ENCODE measurements at regions of chr6 and their contacts with region 1.

Region 1: DNA sequence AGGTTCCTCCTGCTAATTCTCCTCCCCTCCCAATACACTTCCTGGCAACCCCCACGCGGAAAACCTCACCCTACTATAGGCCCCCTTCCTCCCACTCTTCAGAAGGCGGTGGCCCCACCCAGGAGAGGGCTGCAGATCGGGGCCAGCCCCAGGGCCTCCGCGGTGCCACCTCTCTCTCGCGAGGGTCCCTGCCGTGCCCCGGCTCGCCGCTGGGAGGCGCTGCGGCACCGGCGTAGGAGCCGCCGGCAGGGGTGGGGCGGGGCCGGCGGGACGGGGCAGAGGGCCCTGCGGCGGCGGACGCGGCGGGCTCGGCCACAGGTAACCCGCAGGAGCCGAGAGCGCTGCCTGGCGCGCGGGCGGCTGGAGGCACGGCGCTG is at the start of gene ANKRD6:
- DNase-seq: peak; percentile 84
- ATAC-seq: peak; percentile 95
- H3K4me3 Mint-ChIP-seq: peak within 1 kb of the TSS; percentile 69
- H3K27ac Mint-ChIP-seq: peak within 1 kb of the TSS; percentile 12
- H3K4me1 Mint-ChIP-seq: peaks cover 16% of the 10 kb centered on the region
- H3K27me3 Mint-ChIP-seq: peaks cover 49% of the 10 kb centered on the region
- total RNA-seq, gene ANKRD6: 1.7 to 4.5 TPM

Region 2: DNA sequence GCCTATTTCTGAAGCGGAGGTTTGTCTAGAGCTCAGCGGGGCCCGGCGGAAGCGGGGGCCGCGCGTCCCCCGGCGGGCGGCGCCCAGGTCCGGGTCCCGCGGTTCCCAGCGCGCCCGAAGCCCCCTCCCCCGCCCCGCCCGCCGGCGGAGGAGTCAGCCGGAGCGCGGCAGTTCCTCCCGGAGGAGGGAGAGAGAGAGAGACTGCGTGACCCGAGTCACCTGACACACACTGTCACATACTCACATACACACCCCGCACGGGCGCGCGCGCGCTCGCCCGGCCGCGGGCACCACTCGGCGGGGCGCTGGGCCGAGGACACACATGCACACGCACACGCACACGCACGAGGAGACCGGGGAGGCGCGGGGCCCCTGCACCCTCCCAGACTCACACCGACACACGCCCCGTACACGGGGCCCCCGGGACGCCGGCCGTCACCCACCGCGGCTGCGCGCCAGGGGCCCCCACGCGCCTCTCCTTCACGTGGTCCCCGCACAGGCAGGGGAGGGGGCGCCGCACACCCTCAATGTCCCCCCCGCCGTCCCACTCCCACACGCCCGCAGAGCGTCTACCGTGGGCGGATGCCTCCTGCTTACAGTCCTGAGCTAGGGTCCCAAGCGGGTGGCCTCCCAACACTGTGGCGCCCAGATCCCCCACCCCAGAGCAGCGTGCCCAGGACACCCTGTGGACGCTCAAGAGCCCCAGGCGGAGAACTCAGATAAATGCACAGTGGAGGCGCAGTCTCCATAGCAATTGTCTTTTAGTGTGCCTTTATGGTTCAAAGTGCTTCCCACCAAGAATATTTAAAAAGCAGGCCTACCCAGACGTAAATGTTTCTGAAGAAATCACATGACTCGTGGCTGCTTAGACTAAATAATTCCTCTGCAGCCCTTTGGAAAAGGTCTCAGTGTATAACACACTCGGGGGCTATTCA is 20.5 kb before region 1 on chr6 and contains the start of gene RRAGD:
- CTCF ChIA-PET with region 1: interaction called, 13 read pairs
- DNase-seq: peak; percentile 70
- ATAC-seq: peak; percentile 88
- H3K4me3 Mint-ChIP-seq: peak within 1 kb of the TSS; percentile 83
- H3K27ac Mint-ChIP-seq: peak within 1 kb of the TSS; percentile 67
- H3K4me1 Mint-ChIP-seq: peaks cover 20% of the 10 kb centered on the region
- H3K27me3 Mint-ChIP-seq: peaks cover 61% of the 10 kb centered on the region
- total RNA-seq, gene RRAGD: 1.3 to 5.7 TPM

Region 3: GRCh38 chr6:89610149-89610642 is 177.3 kb after region 1 on chr6:
- CTCF ChIA-PET with region 1: interaction called, 57 read pairs
- DNase-seq: peak; percentile 83
- ATAC-seq: peak; percentile 88
- H3K4me3 Mint-ChIP-seq: no peak overlapping the region
- H3K27ac Mint-ChIP-seq: no peak overlapping the region
- H3K4me1 Mint-ChIP-seq: peaks cover 22% of the 10 kb centered on the region
- H3K27me3 Mint-ChIP-seq: no peaks in the 10 kb centered on the region

Region 4: GRCh38 chr6:89638320-89639195 is 205.7 kb after region 1 on chr6 and contains the start of gene LYRM2:
- CTCF ChIA-PET with region 1: interaction called, 13 read pairs
- DNase-seq: peak; percentile 95
- ATAC-seq: peak; percentile 98
- H3K4me3 Mint-ChIP-seq: peak within 1 kb of the TSS; percentile 87
- H3K27ac Mint-ChIP-seq: peak within 1 kb of the TSS; percentile 98
- H3K4me1 Mint-ChIP-seq: peaks cover 32% of the 10 kb centered on the region
- H3K27me3 Mint-ChIP-seq: no peaks in the 10 kb centered on the region
- total RNA-seq, gene LYRM2: 28.9 to 30.1 TPM

Measured in activated CD8-positive, alpha-beta memory T cell treated with anti-CD3 and anti-CD28 coated beads, Interleukin-2, amount 10 ng/mL, durations not matched to agents 7 days and 5 days (primary cell).